ENCODE measurements at regions of chr17 and their contacts with region 1.

Region 1: GRCh38 chr17:28951991-28952975 is 965 bp upstream of the PHF12 start:
- DNase-seq: peak; percentile 97 to 99
- H3K4me3 ChIP-seq: peak overlapping the region; percentile 64
- H3K4me3 Mint-ChIP-seq: no peak overlapping the region
- H3K27ac Mint-ChIP-seq: no peak overlapping the region
- H3K4me1 ChIP-seq: peaks cover 10% of the 10 kb centered on the region
- H3K4me1 Mint-ChIP-seq: no peaks in the 10 kb centered on the region
- H3K27me3 ChIP-seq: no peaks in the 10 kb centered on the region
- H3K27me3 Mint-ChIP-seq: no peaks in the 10 kb centered on the region
- CTCF ChIP-seq: no peak

Region 2: DNA sequence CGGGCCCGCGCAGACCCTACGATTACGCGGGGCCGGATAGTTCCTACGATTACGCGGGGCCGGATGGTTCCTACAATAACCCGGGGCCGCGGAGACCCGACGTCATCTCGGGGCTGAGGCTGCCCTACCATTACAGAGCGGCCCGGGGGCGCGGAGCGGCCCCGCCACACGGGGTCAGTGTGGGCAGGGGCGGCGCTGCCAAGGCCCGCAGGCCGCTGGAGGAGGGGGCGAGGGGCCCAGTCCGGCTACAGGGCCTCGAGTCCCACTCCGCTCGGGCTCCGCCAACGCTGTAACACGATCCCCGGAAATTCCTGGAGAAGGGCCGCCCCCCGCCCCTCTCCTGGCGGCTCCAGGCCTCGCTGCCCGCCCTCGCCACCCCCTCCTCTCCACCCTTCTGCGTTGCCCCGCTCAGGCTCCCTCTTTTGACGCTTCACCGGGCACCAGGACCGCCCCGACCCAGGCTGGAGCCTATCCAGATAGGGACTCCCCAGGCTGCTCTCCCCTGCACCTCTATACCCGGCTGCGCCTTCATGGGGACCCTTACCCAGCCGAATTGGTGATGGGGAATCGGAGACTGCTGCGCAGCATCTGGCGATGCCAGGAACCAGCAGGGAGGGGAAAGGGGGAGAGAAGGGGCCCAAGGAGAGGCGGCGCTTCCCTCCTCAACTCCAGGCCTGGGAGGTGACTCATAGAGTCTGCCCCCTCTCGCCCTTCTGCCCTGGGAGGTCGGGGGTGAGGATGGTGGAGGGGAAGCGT is 234.5 kb before region 1 on chr17 and contains the start of gene RAB34:
- CTCF ChIA-PET with region 1: interaction called, 5 read pairs
- POLR2A ChIA-PET with region 1: interaction called, 11 read pairs
- intact Hi-C with region 1: no loop called
- DNase-seq: peak in 1 of 2 experiments; percentile 58
- H3K4me3 ChIP-seq: no peak within 1 kb of the TSS
- H3K4me3 Mint-ChIP-seq: peak within 1 kb of the TSS; percentile 94
- H3K27ac Mint-ChIP-seq: peak within 1 kb of the TSS; percentile 98
- H3K4me1 ChIP-seq: peaks cover 19% of the 10 kb centered on the region
- H3K4me1 Mint-ChIP-seq: peaks cover 18% of the 10 kb centered on the region
- H3K27me3 ChIP-seq: no peaks in the 10 kb centered on the region
- H3K27me3 Mint-ChIP-seq: no peaks in the 10 kb centered on the region
- CTCF ChIP-seq: no peak
- total RNA-seq, gene RAB34: 1.2 and 1.8 TPM in 2 replicates

Region 3: GRCh38 chr17:28763804-28764266 is 188.4 kb before region 1 on chr17:
- CTCF ChIA-PET with region 1: interaction called, 10 read pairs
- POLR2A ChIA-PET with region 1: no interaction called
- intact Hi-C with region 1: no loop called
- DNase-seq: peak; percentile 80 to 87
- H3K4me3 ChIP-seq: no peak overlapping the region
- H3K4me3 Mint-ChIP-seq: no peak overlapping the region
- H3K27ac Mint-ChIP-seq: peak overlapping the region; percentile 13
- H3K4me1 ChIP-seq: no peaks in the 10 kb centered on the region
- H3K4me1 Mint-ChIP-seq: no peaks in the 10 kb centered on the region
- H3K27me3 ChIP-seq: no peaks in the 10 kb centered on the region
- H3K27me3 Mint-ChIP-seq: no peaks in the 10 kb centered on the region
- CTCF ChIP-seq: peak; percentile 85 to 88

Region 4: DNA sequence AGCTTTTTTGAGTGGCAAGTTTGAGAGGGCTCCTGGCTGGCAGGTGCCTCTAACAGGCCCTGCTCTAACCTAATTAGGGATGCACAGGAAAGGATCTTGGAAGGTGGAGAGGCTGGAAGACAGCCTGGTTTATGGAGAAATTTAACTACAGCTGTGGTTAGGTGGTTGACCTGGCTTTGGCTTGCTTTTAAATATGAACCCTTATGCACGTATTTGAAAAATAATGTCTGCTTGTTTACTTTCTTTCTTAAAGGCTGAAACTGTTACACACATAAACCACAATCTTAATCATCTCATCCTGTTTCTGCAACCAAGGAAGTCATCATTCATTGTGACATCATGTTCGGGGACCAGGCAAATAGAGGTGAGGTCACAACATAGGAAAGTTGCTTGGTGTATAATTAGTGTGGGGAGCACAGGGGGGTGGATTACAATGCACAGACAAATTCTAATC is 26.3 kb before region 1 on chr17:
- CTCF ChIA-PET with region 1: no interaction called
- POLR2A ChIA-PET with region 1: no interaction called
- intact Hi-C with region 1: no loop called
- DNase-seq: no peak
- H3K4me3 ChIP-seq: no peak overlapping the region
- H3K4me3 Mint-ChIP-seq: no peak overlapping the region
- H3K27ac Mint-ChIP-seq: no peak overlapping the region
- H3K4me1 ChIP-seq: no peaks in the 10 kb centered on the region
- H3K4me1 Mint-ChIP-seq: no peaks in the 10 kb centered on the region
- H3K27me3 ChIP-seq: no peaks in the 10 kb centered on the region
- H3K27me3 Mint-ChIP-seq: no peaks in the 10 kb centered on the region
- CTCF ChIP-seq: no peak

Region 5: DNA sequence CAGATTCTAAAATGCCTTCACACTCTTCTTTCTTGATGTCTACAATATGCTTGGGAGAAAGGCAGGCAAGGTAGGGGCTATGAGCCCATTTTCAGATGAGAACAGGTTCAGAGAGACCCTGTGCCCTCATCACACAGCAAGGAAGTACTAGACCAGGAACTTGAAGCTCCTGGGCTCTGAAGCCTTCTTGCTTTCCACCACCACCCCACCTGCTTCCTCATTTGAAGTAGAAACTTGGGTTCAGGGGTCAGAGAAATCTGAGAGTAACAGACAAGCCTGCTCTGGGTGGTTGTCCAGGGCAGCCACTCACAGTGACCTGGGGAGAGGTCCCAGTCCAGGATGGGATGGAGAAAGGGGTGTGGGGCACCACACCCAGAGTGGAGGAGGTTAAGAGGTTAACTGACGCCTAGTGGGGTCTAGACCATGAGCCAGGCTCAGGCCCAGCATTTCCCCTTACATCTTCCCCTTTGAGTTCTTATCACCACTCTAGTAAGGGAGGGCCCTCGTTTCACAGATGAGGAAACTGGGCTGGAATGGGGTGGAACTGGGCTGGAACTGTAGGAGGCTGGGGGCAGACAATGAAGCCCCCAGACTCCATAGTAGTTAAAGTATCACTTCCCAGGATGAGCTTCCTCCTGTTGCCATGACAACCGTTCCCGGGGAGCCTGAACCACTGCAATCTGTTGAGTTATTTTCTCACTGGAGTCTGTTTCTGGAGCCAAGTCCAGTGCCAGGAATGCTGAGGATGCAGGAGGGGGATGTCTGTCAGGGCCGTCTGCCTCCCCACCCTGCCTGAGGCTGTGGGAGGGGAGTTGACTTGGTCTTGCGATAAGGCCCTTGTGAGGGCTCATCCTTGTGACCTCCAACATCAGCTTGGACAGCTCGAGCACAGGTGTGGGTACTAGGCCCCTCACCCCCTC is 15.2 kb after region 1 on chr17:
- CTCF ChIA-PET with region 1: interaction called, 21 read pairs
- POLR2A ChIA-PET with region 1: interaction called, 5 read pairs
- intact Hi-C with region 1: no loop called
- DNase-seq: no peak
- H3K4me3 ChIP-seq: no peak overlapping the region
- H3K4me3 Mint-ChIP-seq: no peak overlapping the region
- H3K27ac Mint-ChIP-seq: no peak overlapping the region
- H3K4me1 ChIP-seq: peaks cover 8% of the 10 kb centered on the region; the same call in 1 of the 2 replicates
- H3K4me1 Mint-ChIP-seq: peaks cover 7% of the 10 kb centered on the region
- H3K27me3 ChIP-seq: no peaks in the 10 kb centered on the region
- H3K27me3 Mint-ChIP-seq: peaks cover 4% of the 10 kb centered on the region
- CTCF ChIP-seq: no peak

Region 6: GRCh38 chr17:29155227-29155965 is 203.1 kb after region 1 on chr17:
- CTCF ChIA-PET with region 1: interaction called, 3 read pairs
- POLR2A ChIA-PET with region 1: no interaction called
- intact Hi-C with region 1: loop called (anchors 5 kb)
- DNase-seq: peak; percentile 82 to 92
- H3K4me3 ChIP-seq: no peak overlapping the region
- H3K4me3 Mint-ChIP-seq: peak overlapping the region; percentile 53
- H3K27ac Mint-ChIP-seq: peak overlapping the region; percentile 97
- H3K4me1 ChIP-seq: peaks cover 81% of the 10 kb centered on the region
- H3K4me1 Mint-ChIP-seq: peaks cover 42% of the 10 kb centered on the region
- H3K27me3 ChIP-seq: no peaks in the 10 kb centered on the region
- H3K27me3 Mint-ChIP-seq: no peaks in the 10 kb centered on the region
- CTCF ChIP-seq: no peak

Measured in Caco-2 (cell line).